Heart left ventricle (tissue), 16 donors: ENCODE measurements at regions of chr12 and their contacts with region 1.

Region 1: GRCh38 chr12:52121824-52122539 is 42.5 kb downstream of the SMIM41 start:
- DNase-seq: peak; percentile 62 to 83 (median 75)
- ATAC-seq: peak in 3 of 4 donors; percentile 27 to 53 (median 29)
- H3K4me3 ChIP-seq: no peak overlapping the region
- H3K27ac ChIP-seq: peak overlapping the region in 1 of 12 donors; percentile 23
- H3K4me1 ChIP-seq: peaks cover 0 to 41% (median 21%) of the 10 kb centered on the region in 12 donors
- H3K27me3 ChIP-seq: peaks cover 0 to 17% (median 3%) of the 10 kb centered on the region in 9 donors
- CTCF ChIP-seq: peak; percentile 69 to 88 (median 78)
- POLR2A ChIP-seq: no peak

Region 2: GRCh38 chr12:51891843-51892242 is 230.1 kb before region 1 on chr12:
- intact Hi-C with region 1: loop called in 1 of 10 experiments (anchors 10 kb)
- DNase-seq: no peak
- ATAC-seq: no peak
- H3K4me3 ChIP-seq: no peak overlapping the region
- H3K27ac ChIP-seq: no peak overlapping the region
- H3K4me1 ChIP-seq: peaks cover 3 to 29% (median 18%) of the 10 kb centered on the region in 12 donors
- H3K27me3 ChIP-seq: no peaks in the 10 kb centered on the region
- CTCF ChIP-seq: peak; percentile 23 to 55 (median 39)
- POLR2A ChIP-seq: no peak

Region 3: DNA sequence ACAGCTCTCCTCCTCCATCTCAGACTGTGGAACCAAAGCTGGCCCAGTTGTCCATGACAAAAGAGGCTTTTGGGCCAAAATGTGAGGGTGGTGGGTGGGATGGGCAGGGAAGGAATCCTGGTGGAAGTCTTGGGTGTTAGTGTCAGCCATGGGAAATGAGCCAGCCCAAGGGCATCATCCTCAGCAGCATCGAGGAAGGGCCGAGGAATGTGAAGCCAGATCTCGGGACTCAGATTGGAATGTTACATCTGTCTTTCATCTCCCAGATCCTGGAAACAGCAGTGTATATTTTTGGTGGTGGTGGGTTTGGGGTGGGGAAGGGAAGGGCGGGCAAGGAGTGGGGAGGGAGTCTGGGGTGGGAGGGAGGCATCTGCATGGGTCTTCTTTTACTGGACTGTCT is 127.0 kb before region 1 on chr12:
- intact Hi-C with region 1: loop called in 5 of 10 experiments (anchors 5 kb)
- DNase-seq: no peak
- ATAC-seq: no peak
- H3K4me3 ChIP-seq: no peak overlapping the region
- H3K27ac ChIP-seq: no peak overlapping the region
- H3K4me1 ChIP-seq: peaks cover 0 to 2% (median 0%) of the 10 kb centered on the region in 12 donors
- H3K27me3 ChIP-seq: no peaks in the 10 kb centered on the region
- CTCF ChIP-seq: no peak
- POLR2A ChIP-seq: no peak

Region 4: GRCh38 chr12:52004042-52004648 is 117.8 kb before region 1 on chr12:
- intact Hi-C with region 1: loop called in 5 of 10 experiments (anchors 2 to 5 kb)
- DNase-seq: peak in 4 of 5 donors; percentile 59 to 64 (median 60)
- ATAC-seq: peak; percentile 16 to 40 (median 30)
- H3K4me3 ChIP-seq: no peak overlapping the region
- H3K27ac ChIP-seq: no peak overlapping the region
- H3K4me1 ChIP-seq: peaks cover 0 to 47% (median 17%) of the 10 kb centered on the region in 12 donors
- H3K27me3 ChIP-seq: peaks cover 0 to 20% (median 4%) of the 10 kb centered on the region in 9 donors
- CTCF ChIP-seq: peak; percentile 48 to 77 (median 70)
- POLR2A ChIP-seq: no peak

Region 5: GRCh38 chr12:52082988-52083637 is 38.9 kb before region 1 on chr12:
- intact Hi-C with region 1: loop called in 2 of 10 experiments (anchors 5 kb)
- DNase-seq: peak; percentile 44 to 80 (median 64)
- ATAC-seq: peak in 3 of 4 donors; percentile 44 to 58 (median 47)
- H3K4me3 ChIP-seq: no peak overlapping the region
- H3K27ac ChIP-seq: peak overlapping the region; percentile 37 to 89 (median 71)
- H3K4me1 ChIP-seq: peaks cover 6 to 37% (median 27%) of the 10 kb centered on the region in 12 donors
- H3K27me3 ChIP-seq: peaks cover 0 to 6% (median 0%) of the 10 kb centered on the region in 9 donors
- CTCF ChIP-seq: peak; percentile 93 to 99 (median 98)
- POLR2A ChIP-seq: no peak

Region 6: GRCh38 chr12:52147367-52147972 is 25.5 kb after region 1 on chr12:
- intact Hi-C with region 1: loop called in 1 of 10 experiments (anchors 2 kb)
- DNase-seq: peak; percentile 83 to 93 (median 88)
- ATAC-seq: peak; percentile 87 to 93 (median 88)
- H3K4me3 ChIP-seq: no peak overlapping the region
- H3K27ac ChIP-seq: peak overlapping the region; percentile 57 to 85 (median 82)
- H3K4me1 ChIP-seq: peaks cover 6 to 63% (median 37%) of the 10 kb centered on the region in 12 donors
- H3K27me3 ChIP-seq: no peaks in the 10 kb centered on the region
- CTCF ChIP-seq: no peak
- POLR2A ChIP-seq: peak in 1 of 2 donors; percentile 69

Region 7: DNA sequence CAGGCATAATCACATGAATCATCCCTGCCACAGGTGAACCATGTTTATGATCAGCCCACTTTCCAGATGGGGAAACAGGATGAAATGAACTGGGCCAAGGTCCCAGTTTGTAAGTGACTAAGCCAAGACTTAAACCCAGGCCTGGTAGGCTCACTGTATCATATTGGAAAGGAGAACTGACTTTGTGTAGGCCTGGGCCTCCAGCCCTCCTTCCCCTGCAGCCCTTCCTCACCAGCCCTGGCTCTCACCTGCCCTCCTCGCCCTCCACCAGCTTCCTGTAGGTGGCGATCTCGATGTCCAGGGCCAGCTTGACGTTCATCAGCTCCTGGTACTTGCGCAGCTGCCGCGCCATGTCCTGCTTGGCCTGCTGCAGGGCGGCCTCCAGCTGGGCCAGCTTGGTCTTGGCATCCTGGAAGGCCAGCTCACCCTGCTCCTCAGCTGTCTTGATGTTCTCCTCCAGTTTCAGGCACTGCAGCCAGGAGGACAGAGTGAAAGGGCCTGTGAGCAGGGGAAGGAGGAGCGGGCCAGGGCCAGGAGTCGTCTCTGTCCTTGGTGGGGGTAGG is 50.0 kb after region 1 on chr12:
- intact Hi-C with region 1: no loop called
- DNase-seq: peak in 1 of 5 donors; percentile 53
- ATAC-seq: no peak
- H3K4me3 ChIP-seq: no peak overlapping the region
- H3K27ac ChIP-seq: no peak overlapping the region
- H3K4me1 ChIP-seq: peaks cover 0 to 21% (median 6%) of the 10 kb centered on the region in 12 donors
- H3K27me3 ChIP-seq: no peaks in the 10 kb centered on the region
- CTCF ChIP-seq: peak in 5 of 12 donors; percentile 4 to 27 (median 11)
- POLR2A ChIP-seq: no peak